ENCODE measurements at regions of chr9 and their contacts with region 1.

Region 1: GRCh38 chr9:126781186-126782052 is 23.4 kb upstream of the ZBTB43 start:
- DNase-seq: peak; percentile 76
- H3K4me3 ChIP-seq: peak overlapping the region; percentile 41
- H3K27ac ChIP-seq: no peak overlapping the region
- H3K4me1 ChIP-seq: no peaks in the 10 kb centered on the region
- H3K27me3 ChIP-seq: peaks cover 40% of the 10 kb centered on the region

Region 2: DNA sequence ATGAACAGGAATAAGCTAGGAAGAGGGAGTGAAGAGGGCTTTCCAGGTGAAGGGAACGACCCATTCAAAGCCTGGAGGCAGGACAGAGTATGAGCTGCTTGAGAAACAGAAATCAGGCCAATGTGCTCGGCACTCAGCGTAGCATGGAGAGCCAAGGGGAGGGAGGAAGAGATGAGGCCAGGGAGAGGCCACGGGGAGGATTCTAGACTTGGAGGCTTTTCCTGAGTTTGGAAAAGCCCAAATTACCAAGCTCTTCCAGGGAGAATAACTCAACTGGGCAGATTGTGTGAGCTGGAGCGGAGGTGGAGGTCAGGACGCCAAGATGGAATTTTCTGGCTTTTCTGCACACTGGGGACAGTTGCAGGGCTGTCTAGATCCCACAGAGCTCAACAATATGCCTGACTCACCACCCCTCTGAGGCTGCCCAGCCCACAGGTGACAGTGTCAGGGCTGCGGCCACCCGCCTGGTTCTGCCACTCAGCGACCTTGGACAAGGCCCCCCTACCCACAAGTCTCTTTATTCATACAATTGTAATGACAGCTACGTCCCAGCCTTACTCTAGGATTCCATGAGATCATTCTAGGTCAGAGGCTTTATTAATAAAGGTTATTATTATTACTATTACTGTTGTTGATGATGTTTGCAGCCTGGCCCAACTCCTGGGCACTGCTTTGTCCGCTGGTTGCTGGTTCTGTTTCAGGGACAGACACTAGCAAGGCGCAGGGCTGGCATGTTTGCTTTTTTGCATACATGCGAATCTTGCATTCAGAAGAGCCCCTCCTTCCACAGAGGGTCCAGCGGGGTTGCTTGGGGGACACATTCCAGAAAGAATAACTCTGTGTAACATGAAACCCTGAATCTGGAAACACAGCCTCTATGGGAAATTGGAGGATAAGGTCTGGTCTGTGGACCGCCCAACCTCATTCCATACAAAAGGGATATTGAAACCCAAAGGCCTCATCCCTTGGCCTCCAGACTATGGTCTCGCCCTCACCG is 177.1 kb before region 1 on chr9:
- in situ Hi-C with region 1: loop called (anchors 10 kb)
- DNase-seq: no peak
- H3K4me3 ChIP-seq: no peak overlapping the region
- H3K27ac ChIP-seq: no peak overlapping the region
- H3K4me1 ChIP-seq: no peaks in the 10 kb centered on the region
- H3K27me3 ChIP-seq: peaks cover 7% of the 10 kb centered on the region; the same call in 1 of the 2 replicates

Region 3: GRCh38 chr9:126927419-126927818 is 146.0 kb after region 1 on chr9:
- in situ Hi-C with region 1: no loop called
- DNase-seq: no peak
- H3K4me3 ChIP-seq: no peak overlapping the region
- H3K27ac ChIP-seq: no peak overlapping the region
- H3K4me1 ChIP-seq: no peaks in the 10 kb centered on the region
- H3K27me3 ChIP-seq: peaks cover 26% of the 10 kb centered on the region